GM12878 (cell line): ENCODE measurements at regions of chr4 and their contacts with region 1.

Region 1: GRCh38 chr4:7081891-7082471 is 14.1 kb upstream of the GRPEL1 start:
- DNase-seq: no peak
- ATAC-seq: peak; percentile 90
- H3K4me3 ChIP-seq: no peak overlapping the region
- H3K27ac ChIP-seq: no peak overlapping the region
- H3K4me1 ChIP-seq: no peaks in the 10 kb centered on the region
- H3K27me3 ChIP-seq: no peaks in the 10 kb centered on the region
- CTCF ChIP-seq: peak; percentile 58 to 69 (median 61)
- EP300 ChIP-seq: no peak
- POLR2A ChIP-seq: no peak
- RAD21 ChIP-seq: peak; percentile 58

Region 2: DNA sequence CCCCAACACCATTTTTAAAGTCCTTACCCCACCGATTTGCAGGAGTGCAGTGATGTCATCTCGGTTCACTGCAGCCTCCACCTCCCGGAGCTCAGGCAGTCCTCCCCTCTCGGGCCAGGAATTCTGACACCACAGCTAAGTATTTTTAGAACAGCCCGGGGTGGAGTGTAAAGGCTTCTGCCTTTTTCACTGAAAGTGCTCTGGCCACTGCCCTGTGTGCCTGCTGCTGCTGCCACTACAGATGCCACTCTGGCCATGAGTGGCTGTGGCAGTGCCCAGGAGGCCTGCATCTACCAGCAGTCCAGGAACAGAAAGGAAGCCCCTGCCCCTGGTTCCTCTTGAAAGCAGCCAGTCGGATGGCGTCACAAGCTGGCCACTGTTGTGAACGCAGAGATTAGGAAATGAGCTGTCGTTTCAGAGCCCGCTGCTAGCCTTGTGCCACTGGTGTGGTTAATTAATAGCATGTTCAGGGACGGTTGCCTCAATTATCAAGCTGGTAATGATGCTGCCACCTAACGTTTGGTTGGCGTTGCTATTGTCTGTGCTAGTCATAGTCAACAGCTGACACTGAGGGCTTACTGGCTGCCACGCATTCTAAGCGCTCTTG is 195.9 kb before region 1 on chr4:
- CTCF ChIA-PET with region 1: interaction called, 10 read pairs
- POLR2A ChIA-PET with region 1: no interaction called
- RAD21 ChIA-PET with region 1: no interaction called
- SMC1A ChIA-PET with region 1: interaction called, 3 read pairs
- in situ Hi-C with region 1: no loop called
- intact Hi-C with region 1: no loop called
- DNase-seq: peak; percentile 34
- ATAC-seq: peak; percentile 94
- H3K4me3 ChIP-seq: no peak overlapping the region
- H3K27ac ChIP-seq: no peak overlapping the region
- H3K4me1 ChIP-seq: no peaks in the 10 kb centered on the region
- H3K27me3 ChIP-seq: no peaks in the 10 kb centered on the region
- CTCF ChIP-seq: peak; percentile 26 to 51 (median 35); a peak in 4 of 6 replicates
- EP300 ChIP-seq: no peak
- POLR2A ChIP-seq: no peak
- RAD21 ChIP-seq: 0 out of 2 replicates have a peak, but pooled peaks have one; percentile 1

Region 3: DNA sequence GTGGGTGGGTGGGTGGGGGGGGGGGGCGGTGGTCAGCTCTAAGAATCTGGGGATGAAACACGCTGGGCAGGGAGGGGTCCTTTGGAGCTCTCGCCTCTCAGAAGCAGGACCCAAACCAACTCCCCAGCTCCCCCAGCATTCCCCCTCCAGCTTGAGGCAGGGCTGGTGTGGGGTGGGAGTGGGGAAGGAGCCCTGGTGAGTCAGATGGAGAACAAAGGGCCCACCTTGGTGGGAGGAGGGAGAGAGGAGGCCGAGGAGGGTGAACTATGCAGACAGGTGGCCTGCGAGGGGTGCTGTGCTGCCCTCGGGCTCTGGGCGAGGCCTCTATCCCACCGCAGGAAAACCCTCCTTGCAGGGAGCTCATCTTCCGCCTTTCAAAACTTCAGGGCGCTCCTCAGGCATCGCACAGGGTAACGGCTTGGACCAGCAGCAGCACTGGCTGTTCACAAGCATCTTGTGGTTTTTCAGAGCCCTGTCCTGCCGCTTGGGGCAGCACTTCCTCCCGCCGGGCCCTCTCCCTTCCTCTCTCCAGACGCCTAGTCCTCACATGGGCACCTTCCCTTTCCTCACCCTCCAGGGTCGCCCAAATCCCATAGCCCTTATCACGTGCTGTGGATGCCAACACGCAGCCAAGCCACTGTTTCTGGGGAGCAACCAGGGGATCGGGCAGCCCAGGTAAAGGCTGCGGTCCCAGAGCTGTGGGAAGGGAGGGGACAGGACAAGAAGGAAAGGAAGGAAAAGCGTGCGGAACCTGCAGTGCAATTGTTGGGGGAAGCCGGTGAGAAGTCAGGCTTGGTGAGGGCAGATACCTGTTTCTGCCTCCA is 19.9 kb after region 1 on chr4:
- CTCF ChIA-PET with region 1: interaction called, 24 read pairs
- POLR2A ChIA-PET with region 1: no interaction called
- RAD21 ChIA-PET with region 1: no interaction called
- SMC1A ChIA-PET with region 1: interaction called, 3 read pairs
- in situ Hi-C with region 1: no loop called
- intact Hi-C with region 1: no loop called
- DNase-seq: no peak
- ATAC-seq: peak; percentile 90
- H3K4me3 ChIP-seq: peak overlapping the region; percentile 78
- H3K27ac ChIP-seq: no peak overlapping the region
- H3K4me1 ChIP-seq: peaks cover 7% of the 10 kb centered on the region
- H3K27me3 ChIP-seq: peaks cover 3% of the 10 kb centered on the region in 2 experiments; a peak in 2 of 4 replicates
- CTCF ChIP-seq: peak; percentile 60 to 86 (median 72)
- EP300 ChIP-seq: no peak
- POLR2A ChIP-seq: no peak
- RAD21 ChIP-seq: no peak

Region 4: GRCh38 chr4:7227008-7227407 is 145.0 kb after region 1 on chr4:
- CTCF ChIA-PET with region 1: no interaction called
- POLR2A ChIA-PET with region 1: no interaction called
- RAD21 ChIA-PET with region 1: no interaction called
- SMC1A ChIA-PET with region 1: no interaction called
- in situ Hi-C with region 1: no loop called
- intact Hi-C with region 1: no loop called
- DNase-seq: no peak
- ATAC-seq: no peak
- H3K4me3 ChIP-seq: no peak overlapping the region
- H3K27ac ChIP-seq: no peak overlapping the region
- H3K4me1 ChIP-seq: no peaks in the 10 kb centered on the region
- H3K27me3 ChIP-seq: no peaks in the 10 kb centered on the region; a peak in 3 of 4 replicates
- CTCF ChIP-seq: no peak
- EP300 ChIP-seq: no peak
- POLR2A ChIP-seq: no peak
- RAD21 ChIP-seq: no peak